Common myeloid progenitor, CD34-positive (primary cell): ENCODE measurements at regions of chr17 and their contacts with region 1.

Region 1: DNA sequence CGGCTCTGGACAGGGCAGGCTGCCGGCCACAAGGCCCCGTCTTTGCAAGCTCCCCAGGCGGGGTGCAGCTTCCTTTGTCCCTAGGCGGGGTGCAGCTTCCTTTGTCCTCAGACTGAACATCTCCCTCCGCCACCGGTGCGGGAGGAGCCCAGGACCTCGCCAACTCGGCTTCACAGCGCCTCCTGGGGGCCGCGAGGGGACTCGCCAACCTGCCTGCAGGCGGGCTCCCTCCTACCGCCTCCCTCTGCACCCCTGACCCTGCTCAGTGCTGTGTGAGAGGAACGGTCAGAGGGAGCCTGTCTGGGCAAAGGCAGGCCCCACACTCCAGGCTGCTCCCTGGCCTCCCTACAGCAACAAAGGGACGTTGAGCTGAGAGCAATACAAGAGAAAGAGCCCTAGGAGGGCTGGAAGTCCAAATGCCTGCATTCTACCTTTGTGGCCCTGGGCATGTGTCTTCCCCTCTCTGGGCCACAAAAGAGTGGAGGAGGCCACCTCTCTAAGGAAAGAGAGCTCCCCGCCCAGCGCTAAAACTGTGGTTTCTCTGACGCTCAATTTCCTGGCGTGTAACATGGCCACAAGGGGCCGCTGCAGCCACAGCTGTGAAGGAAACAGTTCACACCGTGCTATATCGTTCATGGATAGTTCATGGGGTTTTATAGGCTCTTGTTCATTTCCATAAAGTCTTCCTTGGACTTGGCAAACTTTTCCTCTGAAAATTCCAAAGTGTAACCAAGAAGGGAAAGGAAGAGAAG is 20.9 kb upstream of the KRT19 start:
- DNase-seq: peak; percentile 71 to 87 (median 85)
- H3K4me3 ChIP-seq: peak overlapping the region in 5 of 7 experiments; percentile 26 to 65 (median 58)
- H3K27ac ChIP-seq: no peak overlapping the region
- H3K4me1 ChIP-seq: peaks cover 0 to 23% (median 16%) of the 10 kb centered on the region in 4 experiments
- H3K27me3 ChIP-seq: peaks cover 0 to 6% (median 3%) of the 10 kb centered on the region in 5 experiments

Region 2: GRCh38 chr17:40854159-40854814 is 694.7 kb before region 1 on chr17:
- CTCF ChIA-PET with region 1: interaction called, 22 read pairs
- POLR2A ChIA-PET with region 1: no interaction called
- DNase-seq: peak in 2 of 3 donors; percentile 14
- H3K4me3 ChIP-seq: no peak overlapping the region
- H3K27ac ChIP-seq: no peak overlapping the region
- H3K4me1 ChIP-seq: no peaks in the 10 kb centered on the region
- H3K27me3 ChIP-seq: peaks cover 0 to 16% (median 12%) of the 10 kb centered on the region in 5 experiments

Region 3: DNA sequence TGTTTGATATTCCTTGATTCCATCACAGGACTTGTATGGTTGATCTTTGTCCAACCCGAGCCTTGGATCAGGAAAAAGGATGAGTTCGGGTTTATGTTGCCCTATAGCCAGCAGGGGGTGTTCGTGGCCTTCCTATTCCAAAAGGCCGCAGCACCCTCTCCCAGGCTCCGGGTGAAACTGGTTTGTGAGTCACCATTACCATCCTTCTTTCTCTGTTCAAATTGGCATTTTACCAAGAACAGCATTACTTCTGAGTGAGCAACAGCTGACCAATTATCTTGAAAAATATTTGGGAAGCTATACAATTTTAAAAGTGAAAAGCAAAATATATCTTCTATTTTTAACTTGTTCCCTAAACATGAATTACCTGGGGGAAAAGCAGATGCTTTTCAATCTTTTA is 639.7 kb before region 1 on chr17:
- CTCF ChIA-PET with region 1: interaction called, 26 read pairs
- POLR2A ChIA-PET with region 1: no interaction called
- DNase-seq: peak; percentile 76 to 81 (median 77)
- H3K4me3 ChIP-seq: no peak overlapping the region
- H3K27ac ChIP-seq: no peak overlapping the region
- H3K4me1 ChIP-seq: peaks cover 0 to 6% (median 0%) of the 10 kb centered on the region in 4 experiments
- H3K27me3 ChIP-seq: peaks cover 0 to 19% (median 4%) of the 10 kb centered on the region in 5 experiments

Region 4: DNA sequence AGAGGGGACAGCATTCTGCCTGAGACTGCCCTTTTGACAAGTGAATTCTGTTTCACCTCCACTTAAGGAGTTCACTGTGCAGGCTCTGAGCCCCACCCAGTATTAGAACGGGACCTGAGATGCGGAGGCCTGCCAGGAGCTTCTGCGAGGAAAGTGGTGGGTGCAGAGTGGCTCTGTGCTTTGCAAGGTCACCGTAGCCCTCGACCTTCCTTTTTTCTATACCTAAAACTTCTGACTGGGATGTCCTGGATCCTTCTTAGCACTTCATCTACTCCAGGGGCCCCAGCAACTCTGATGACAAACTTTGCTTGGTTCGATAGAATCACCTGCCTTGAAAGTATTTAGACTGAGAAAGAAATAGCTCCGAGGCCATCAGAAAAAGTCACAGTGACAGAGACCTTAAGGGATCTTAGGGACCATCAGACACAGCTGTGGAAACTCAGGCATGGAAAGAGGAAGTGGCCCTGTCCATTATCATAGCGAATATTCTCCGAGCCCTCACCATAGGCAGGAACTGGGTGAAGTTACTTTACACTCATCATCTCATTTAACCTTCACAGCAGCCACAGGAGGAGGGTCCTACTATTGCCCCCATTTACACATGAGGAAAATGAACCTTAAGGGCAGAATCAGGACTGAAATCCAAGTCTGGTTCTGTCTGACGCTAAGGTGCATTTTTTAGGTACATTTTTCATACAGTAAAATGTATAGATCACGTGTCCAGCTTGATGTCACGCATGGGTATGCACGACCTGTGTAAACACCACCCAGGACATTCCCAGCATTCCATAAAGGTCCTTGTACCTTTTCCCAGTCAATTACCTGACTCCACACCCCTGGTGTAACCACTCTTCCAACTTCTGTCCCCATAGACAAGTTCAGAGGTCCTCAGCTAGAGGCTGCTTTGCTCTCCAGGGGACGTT is 43.0 kb before region 1 on chr17:
- CTCF ChIA-PET with region 1: no interaction called
- POLR2A ChIA-PET with region 1: no interaction called
- DNase-seq: peak in 1 of 3 donors; percentile 17
- H3K4me3 ChIP-seq: no peak overlapping the region
- H3K27ac ChIP-seq: no peak overlapping the region
- H3K4me1 ChIP-seq: no peaks in the 10 kb centered on the region
- H3K27me3 ChIP-seq: peaks cover 0 to 2% (median 0%) of the 10 kb centered on the region in 5 experiments

Region 5: DNA sequence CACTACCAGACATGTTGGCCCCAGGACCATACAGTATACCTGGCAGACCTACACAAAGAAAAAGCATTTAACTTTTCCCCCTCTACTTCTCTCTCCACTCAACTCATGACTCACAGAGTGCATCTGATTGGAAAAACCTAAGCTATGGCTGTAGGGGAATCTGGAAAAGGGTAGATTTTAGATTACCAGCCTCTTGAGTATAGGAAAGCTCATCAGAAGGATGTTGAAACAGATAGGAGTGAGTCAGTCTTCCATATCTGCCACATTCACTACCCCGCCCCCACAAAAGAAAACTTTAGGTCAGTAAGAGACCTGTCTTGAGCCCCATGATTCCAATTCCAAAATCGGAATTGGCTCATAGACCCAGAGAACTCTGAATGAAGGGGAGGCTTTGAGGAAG is 10.5 kb after region 1 on chr17:
- CTCF ChIA-PET with region 1: interaction called, 21 read pairs
- POLR2A ChIA-PET with region 1: no interaction called
- DNase-seq: no peak
- H3K4me3 ChIP-seq: no peak overlapping the region
- H3K27ac ChIP-seq: no peak overlapping the region
- H3K4me1 ChIP-seq: no peaks in the 10 kb centered on the region
- H3K27me3 ChIP-seq: peaks cover 4 to 17% (median 13%) of the 10 kb centered on the region in 5 experiments

Region 6: GRCh38 chr17:41567317-41567716 is 18.3 kb after region 1 on chr17:
- CTCF ChIA-PET with region 1: interaction called, 31 read pairs
- POLR2A ChIA-PET with region 1: no interaction called
- DNase-seq: no peak
- H3K4me3 ChIP-seq: no peak overlapping the region
- H3K27ac ChIP-seq: no peak overlapping the region
- H3K4me1 ChIP-seq: no peaks in the 10 kb centered on the region
- H3K27me3 ChIP-seq: peaks cover 0 to 25% (median 9%) of the 10 kb centered on the region in 5 experiments

Region 7: GRCh38 chr17:41594363-41594915 is 45.4 kb after region 1 on chr17:
- CTCF ChIA-PET with region 1: no interaction called
- POLR2A ChIA-PET with region 1: no interaction called
- DNase-seq: no peak
- H3K4me3 ChIP-seq: no peak overlapping the region
- H3K27ac ChIP-seq: no peak overlapping the region
- H3K4me1 ChIP-seq: no peaks in the 10 kb centered on the region
- H3K27me3 ChIP-seq: peaks cover 0 to 3% (median 0%) of the 10 kb centered on the region in 5 experiments

Region 8: DNA sequence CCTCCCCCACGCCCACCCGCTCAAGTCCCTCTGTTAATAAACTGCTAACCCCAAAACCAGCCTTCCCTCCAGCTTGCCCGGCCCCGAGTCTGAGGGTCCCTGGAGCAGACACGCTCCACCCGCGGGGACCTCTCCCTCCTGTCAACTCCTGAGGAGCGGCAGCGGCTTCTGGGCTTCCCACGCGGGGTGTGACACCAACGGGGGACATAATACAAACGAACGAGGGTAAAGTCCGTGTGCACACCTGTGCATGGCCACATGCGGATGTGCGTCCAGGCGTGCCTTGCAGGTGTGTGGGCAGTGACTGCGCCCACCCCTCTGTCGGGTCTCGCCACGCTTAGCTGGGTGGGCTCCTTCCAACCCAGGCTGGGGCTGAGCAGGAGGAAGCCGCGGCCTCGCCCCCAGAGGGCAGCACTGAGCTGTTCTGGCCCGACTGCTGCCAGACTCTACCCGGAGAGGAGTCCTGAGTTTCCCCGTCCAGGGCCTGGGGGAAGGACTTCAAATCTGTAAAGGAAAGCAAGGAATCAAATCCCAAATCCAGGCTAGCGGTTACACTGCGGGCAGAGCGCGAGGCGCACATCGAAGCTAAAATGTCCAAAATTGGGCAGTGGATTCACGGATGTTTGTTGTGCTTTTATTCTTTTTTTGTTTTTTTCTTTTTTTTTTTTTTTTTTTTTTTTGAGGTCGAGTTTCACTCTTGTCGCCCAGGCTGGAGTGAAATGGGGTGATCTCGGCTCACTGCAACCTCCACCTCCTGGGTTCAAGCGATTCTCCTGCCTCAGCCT is 99.6 kb after region 1 on chr17:
- CTCF ChIA-PET with region 1: interaction called, 98 read pairs
- POLR2A ChIA-PET with region 1: no interaction called
- DNase-seq: peak; percentile 79 to 85 (median 81)
- H3K4me3 ChIP-seq: peak overlapping the region; percentile 18 to 75 (median 46)
- H3K27ac ChIP-seq: no peak overlapping the region
- H3K4me1 ChIP-seq: peaks cover 0 to 34% (median 29%) of the 10 kb centered on the region in 4 experiments
- H3K27me3 ChIP-seq: no peaks in the 10 kb centered on the region

Region 9: DNA sequence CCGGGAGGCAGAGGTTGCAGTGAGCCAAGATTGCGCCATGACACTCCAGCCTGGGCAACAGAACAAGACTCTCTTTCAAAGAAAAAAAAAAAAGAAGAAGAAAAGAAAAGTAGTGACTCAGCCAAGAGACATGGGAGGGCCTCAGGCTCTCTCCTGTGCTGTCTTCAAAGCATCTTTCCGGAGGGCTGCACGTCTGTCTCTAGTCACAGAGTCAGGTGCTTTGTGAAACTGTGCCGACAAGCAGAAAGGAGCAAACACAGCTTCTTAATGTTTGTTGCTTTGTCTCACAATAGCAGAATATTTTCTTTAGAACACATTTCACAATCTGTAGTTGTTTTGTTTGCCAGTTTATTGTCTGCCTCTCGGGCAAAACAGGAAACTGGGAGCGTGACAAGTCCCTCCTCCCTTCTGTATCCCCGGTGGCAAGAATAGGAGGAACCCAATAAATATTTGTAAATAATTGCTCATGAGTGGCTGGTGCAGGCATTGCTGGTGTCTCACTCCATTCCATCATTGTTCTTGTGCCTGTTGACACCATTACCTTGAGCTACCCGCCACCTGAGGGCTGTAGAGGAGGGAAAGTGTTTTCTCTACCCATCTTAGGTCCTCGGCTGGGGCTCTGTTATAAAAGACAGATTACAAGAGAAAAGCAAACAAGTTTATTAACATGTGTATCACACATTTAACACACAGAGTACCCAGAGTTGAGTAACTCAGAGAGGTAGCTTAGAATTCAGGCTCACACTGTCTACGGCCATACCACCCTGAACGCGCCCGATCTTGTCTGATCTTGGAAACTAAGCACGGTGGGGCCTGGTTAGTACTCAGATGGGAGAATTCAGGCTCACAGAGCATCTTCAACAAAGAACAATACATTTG is 168.6 kb after region 1 on chr17:
- CTCF ChIA-PET with region 1: no interaction called
- POLR2A ChIA-PET with region 1: no interaction called
- DNase-seq: no peak
- H3K4me3 ChIP-seq: no peak overlapping the region
- H3K27ac ChIP-seq: no peak overlapping the region
- H3K4me1 ChIP-seq: no peaks in the 10 kb centered on the region
- H3K27me3 ChIP-seq: peaks cover 0 to 2% (median 0%) of the 10 kb centered on the region in 5 experiments

Region 10: DNA sequence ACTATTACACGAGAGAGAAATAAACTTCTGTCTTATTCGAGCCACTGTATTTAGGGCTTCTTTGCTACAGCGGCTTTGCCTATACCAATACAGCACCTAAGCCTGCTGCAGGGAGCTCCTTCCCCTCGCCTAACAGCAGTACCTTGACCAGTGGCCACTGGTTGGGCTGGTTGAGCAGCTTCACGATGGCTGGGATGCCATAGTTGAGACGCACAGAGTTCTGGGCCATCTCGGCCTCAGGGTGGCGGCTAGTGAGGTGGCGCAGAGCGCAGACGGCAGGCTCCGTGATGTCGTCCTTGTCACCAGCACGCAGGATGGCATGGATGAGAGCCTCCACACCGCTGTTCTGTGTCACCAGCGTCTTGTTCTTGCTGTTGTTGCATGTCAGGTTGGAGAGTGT is 213.8 kb after region 1 on chr17:
- CTCF ChIA-PET with region 1: no interaction called
- POLR2A ChIA-PET with region 1: no interaction called
- DNase-seq: no peak
- H3K4me3 ChIP-seq: no peak overlapping the region
- H3K27ac ChIP-seq: no peak overlapping the region
- H3K4me1 ChIP-seq: no peaks in the 10 kb centered on the region
- H3K27me3 ChIP-seq: no peaks in the 10 kb centered on the region